ENCODE measurements at regions of chr7 and their contacts with region 1.

Region 1: DNA sequence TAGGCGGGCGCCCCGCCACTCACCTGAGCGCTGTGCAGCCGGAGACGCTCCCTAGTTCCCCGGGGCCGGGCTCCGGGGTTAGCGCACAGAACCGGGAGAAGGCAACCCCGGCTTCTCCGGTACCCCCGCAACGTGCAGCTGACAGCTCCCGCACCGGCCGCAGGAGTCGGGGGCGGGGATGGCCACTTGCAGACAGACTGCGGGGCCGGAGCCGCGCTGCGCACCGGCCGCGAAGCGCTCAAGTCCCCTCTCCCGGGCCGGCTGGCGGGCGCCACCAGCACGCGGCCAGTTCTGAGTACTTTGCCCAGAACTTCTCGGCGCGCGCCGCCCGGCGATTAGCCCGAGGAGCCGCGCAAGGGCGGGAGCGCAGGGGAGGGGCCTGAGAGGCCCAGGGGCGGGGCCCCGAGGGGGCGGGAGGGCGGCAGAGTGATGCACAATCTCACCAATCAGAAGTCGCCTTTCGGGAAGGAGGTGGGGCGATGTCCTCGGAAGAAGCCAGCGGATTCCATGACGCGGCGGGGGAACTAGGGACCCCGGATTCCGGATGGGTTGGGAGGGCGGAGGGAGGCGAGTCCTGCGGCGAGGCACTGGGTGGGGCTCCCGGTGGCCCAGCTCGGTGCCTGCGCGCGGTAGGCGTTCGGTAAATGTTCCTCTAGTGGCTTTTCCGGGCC is at the start of gene OSBPL3:
- DNase-seq: peak; percentile 93
- ATAC-seq: peak; percentile 82
- H3K4me3 Mint-ChIP-seq: peak within 1 kb of the TSS; percentile 86
- H3K27ac Mint-ChIP-seq: peak within 1 kb of the TSS; percentile 94
- H3K4me1 Mint-ChIP-seq: peaks cover 62% of the 10 kb centered on the region
- H3K27me3 Mint-ChIP-seq: peaks cover 47% of the 10 kb centered on the region
- CTCF ChIP-seq: no peak
- total RNA-seq, gene OSBPL3: 16.0 to 20.2 TPM (median 17.1 TPM) in 3 replicates

Region 2: DNA sequence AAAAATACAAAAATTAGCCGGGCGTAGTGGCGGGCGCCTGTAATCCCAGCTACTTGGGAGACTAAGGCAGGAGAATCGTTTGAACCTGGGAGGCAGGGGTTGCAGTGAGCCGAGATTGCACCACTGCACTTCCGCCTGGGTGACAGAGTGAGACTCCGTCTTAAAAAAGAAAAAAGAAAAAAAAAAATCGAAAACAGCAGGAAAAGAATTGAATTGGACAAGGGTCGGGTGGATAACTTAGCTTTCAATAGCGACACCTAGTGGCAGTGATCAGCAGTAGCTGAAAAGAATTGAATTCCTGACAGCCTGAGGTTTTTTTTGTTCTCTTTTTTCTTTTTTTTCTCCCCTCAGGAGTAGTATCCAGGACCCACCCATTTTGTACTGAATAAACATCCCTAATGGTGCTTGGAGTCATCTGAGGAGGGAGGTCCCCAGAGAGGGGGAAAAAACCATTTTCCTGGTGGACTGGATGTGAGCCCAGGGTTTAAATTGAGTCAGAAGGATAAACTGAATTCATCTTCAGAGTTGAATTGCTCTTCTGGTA is 90.0 kb after region 1 on chr7:
- CTCF ChIA-PET with region 1: interaction called, 20 read pairs
- POLR2A ChIA-PET with region 1: no interaction called
- DNase-seq: peak; percentile 39
- ATAC-seq: peak; percentile 92
- H3K4me3 Mint-ChIP-seq: peak overlapping the region; percentile 51
- H3K27ac Mint-ChIP-seq: no peak overlapping the region; the same call in 1 of the 2 replicates
- H3K4me1 Mint-ChIP-seq: peaks cover 17% of the 10 kb centered on the region
- H3K27me3 Mint-ChIP-seq: no peaks in the 10 kb centered on the region
- CTCF ChIP-seq: peak; percentile 85

Measured in WTC11 (cell line).